ENCODE measurements at regions of chr12 and their contacts with region 1.

Region 1: GRCh38 chr12:54053751-54054741 is at the start of gene HOXC4:
- DNase-seq: no peak
- H3K4me3 Mint-ChIP-seq: peak within 1 kb of the TSS; percentile 38
- H3K27ac Mint-ChIP-seq: no peak within 1 kb of the TSS
- H3K4me1 Mint-ChIP-seq: peaks cover 21% of the 10 kb centered on the region
- H3K27me3 Mint-ChIP-seq: peaks cover 67% of the 10 kb centered on the region
- total RNA-seq, gene HOXC4: 0.12 TPM in 1 of 2 experiments, not detected in the other

Region 2: DNA sequence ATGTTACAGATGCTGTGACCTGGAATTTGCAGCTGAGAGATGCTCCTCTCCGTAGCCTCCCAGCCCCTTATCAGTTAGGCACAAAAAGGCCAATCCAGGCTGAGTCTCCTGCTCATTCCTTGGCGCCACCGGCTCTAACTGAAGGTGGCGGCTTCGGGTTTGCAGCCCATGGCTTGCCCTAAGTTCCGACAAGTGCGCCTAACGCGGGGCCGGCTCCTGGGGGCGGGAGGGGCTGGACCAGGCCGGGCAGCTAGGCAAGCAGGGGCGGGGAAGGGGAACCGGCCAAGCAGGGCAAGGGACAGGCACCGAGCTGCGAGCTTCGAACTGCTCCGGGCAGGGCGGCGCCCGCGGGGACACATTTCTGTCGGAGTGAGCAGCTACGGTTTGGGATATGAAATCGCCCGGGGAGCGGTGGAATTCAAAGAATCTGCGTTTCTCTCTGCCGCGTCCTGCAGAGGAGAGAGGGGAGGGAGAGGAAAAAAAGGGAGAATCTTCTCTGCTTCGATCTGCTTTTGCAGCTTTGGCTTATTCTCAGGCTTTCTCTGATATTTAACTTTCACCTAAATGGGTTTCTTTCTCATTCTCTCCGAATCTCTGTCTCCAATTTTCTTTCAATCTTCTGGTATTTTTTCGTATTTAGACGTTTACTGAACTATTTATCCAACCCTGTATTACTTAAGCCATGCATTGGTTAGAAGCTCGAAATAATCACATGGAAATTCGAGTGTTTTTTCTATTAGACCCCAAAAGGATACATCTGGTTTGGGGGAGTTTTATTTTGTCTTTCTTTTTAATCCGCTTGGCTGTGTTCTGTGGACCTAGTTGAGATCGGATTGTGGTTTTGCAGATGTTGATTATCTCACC is 100.9 kb before region 1 on chr12:
- CTCF ChIA-PET with region 1: no interaction called
- intact Hi-C with region 1: loop called (anchors 5 kb)
- DNase-seq: no peak
- H3K4me3 Mint-ChIP-seq: no peak overlapping the region
- H3K27ac Mint-ChIP-seq: no peak overlapping the region
- H3K4me1 Mint-ChIP-seq: peaks cover 40% of the 10 kb centered on the region
- H3K27me3 Mint-ChIP-seq: peaks cover 91% of the 10 kb centered on the region

Region 3: GRCh38 chr12:53974084-53975063 is 79.7 kb before region 1 on chr12 and contains the start of gene HOTAIR:
- CTCF ChIA-PET with region 1: no interaction called
- intact Hi-C with region 1: loop called (anchors 5 kb)
- DNase-seq: peak; percentile 34
- H3K4me3 Mint-ChIP-seq: peak within 1 kb of the TSS; percentile 45
- H3K27ac Mint-ChIP-seq: peak within 1 kb of the TSS; percentile 61
- H3K4me1 Mint-ChIP-seq: peaks cover 20% of the 10 kb centered on the region
- H3K27me3 Mint-ChIP-seq: peaks cover 84% of the 10 kb centered on the region
- total RNA-seq, gene HOTAIR: not detected